MCF 10A (cell line): ENCODE measurements at regions of chr1 and their contacts with region 1.

Region 1: GRCh38 chr1:51535006-51535592 is 16.0 kb upstream of the EPS15 start:
- DNase-seq: peak; percentile 65
- H3K4me3 Mint-ChIP-seq: no peak overlapping the region
- H3K27ac Mint-ChIP-seq: peak overlapping the region; percentile 32
- H3K4me1 Mint-ChIP-seq: peaks cover 7% of the 10 kb centered on the region
- H3K27me3 Mint-ChIP-seq: no peaks in the 10 kb centered on the region
- CTCF ChIP-seq: peak; percentile 55

Region 2: DNA sequence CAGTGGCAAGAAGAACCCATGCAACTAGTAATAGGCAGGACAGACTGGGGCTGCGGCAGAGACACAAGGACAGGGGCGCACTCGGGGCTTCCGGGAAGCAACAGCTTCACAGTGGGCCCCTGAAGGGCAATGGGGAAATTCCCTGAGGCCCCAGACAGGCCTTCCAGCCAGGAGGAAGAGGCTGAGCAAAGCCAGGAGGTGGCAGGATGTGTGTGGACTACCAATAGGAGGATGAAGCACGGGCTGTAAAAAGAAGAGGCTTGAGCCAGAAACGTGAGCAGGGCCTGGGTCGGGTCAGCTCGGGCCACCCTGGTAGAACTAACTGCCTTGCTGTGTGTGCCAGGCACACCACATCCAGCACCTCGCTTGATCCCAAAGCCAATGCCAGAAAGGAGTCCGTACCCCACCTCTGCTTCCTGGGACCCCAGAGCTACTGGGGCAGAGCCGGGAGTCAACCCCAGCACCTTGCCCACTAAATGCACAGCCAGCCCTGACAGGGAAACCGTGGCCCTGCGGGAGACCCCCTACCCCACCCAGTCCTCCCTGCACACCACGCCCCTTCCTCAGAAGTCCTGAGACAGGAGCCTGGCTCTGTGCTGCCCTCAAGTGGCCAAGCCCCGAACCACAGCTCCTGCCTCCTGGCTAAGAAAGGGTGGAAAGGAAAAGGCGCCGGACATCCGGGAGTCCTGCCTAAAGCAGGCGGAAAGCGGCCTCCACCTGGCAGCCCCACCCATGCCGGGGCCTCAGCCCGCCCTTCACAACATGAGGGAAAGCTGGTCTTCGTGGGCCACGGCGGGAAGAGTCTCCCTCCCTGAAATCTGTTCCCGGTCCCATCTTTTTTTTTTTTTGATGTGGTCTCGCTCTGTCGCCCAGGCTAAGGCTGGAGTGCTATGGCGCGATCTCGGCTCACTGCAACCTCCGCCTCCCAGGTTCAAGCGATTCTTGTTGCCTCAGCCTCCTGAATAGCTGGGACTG is 238.4 kb before region 1 on chr1:
- CTCF ChIA-PET with region 1: interaction called, 11 read pairs
- POLR2A ChIA-PET with region 1: no interaction called
- intact Hi-C with region 1: loop called (anchors 1 kb)
- DNase-seq: peak; percentile 83
- H3K4me3 Mint-ChIP-seq: peak overlapping the region; percentile 41
- H3K27ac Mint-ChIP-seq: no peak overlapping the region
- H3K4me1 Mint-ChIP-seq: peaks cover 13% of the 10 kb centered on the region
- H3K27me3 Mint-ChIP-seq: no peaks in the 10 kb centered on the region
- CTCF ChIP-seq: peak; percentile 98

Region 3: DNA sequence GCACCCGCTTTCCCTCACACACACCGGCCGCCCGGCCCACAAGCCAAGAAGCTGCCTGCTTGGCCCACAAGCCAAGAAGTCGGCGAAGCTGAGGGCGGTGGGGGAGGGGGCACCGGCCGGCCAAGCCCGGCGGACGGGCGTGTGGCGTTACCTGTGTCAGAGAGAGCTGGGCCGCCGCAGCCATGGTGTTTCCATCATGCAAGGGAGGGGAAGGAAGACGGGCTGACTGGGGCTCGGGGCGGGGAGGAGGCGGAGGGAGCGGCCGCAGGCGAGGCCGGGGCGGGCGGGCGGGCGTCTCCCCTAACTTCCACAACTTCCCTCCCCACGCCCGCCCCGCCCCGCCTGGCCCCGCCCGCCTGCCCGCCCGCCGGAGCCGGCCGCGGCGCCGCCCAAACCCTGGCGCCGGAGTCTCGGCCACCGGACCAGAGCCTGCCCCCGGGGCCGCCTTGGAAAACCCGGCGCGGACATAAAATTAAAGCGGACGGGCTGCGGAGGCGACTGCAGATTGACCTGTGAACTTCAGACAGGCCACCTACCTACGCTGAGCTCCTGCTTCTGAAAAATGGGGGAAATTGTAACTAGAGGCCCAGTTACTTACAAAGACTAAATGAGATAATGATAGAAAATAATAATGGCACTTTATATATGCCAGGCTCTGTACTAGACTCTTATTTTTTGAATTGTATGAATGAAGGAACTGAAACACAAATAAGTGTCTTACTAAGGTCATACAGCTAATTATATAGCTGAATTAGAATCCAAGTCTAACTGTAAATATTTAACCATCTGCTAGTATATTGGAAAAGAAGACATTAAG is 15.8 kb before region 1 on chr1 and contains the start of gene EPS15:
- CTCF ChIA-PET with region 1: interaction called, 25 read pairs
- POLR2A ChIA-PET with region 1: interaction called, 3 read pairs
- intact Hi-C with region 1: no loop called
- DNase-seq: peak; percentile 87
- H3K4me3 Mint-ChIP-seq: peak within 1 kb of the TSS; percentile 79
- H3K27ac Mint-ChIP-seq: peak within 1 kb of the TSS; percentile 93
- H3K4me1 Mint-ChIP-seq: peaks cover 17% of the 10 kb centered on the region
- H3K27me3 Mint-ChIP-seq: no peaks in the 10 kb centered on the region
- CTCF ChIP-seq: no peak
- total RNA-seq, gene EPS15: 48.2 and 48.7 TPM in 2 replicates

Region 4: GRCh38 chr1:51553911-51554310 is 18.8 kb after region 1 on chr1:
- CTCF ChIA-PET with region 1: interaction called, 18 read pairs
- POLR2A ChIA-PET with region 1: no interaction called
- intact Hi-C with region 1: no loop called
- DNase-seq: no peak
- H3K4me3 Mint-ChIP-seq: no peak overlapping the region
- H3K27ac Mint-ChIP-seq: no peak overlapping the region
- H3K4me1 Mint-ChIP-seq: peaks cover 10% of the 10 kb centered on the region
- H3K27me3 Mint-ChIP-seq: no peaks in the 10 kb centered on the region
- CTCF ChIP-seq: no peak

Region 5: GRCh38 chr1:51616901-51617708 is 82.0 kb after region 1 on chr1 and contains the start of gene OSBPL9:
- CTCF ChIA-PET with region 1: no interaction called
- POLR2A ChIA-PET with region 1: no interaction called
- intact Hi-C with region 1: loop called (anchors 10 kb)
- DNase-seq: peak; percentile 92
- H3K4me3 Mint-ChIP-seq: peak within 1 kb of the TSS; percentile 97
- H3K27ac Mint-ChIP-seq: peak within 1 kb of the TSS; percentile 98
- H3K4me1 Mint-ChIP-seq: peaks cover 39% of the 10 kb centered on the region
- H3K27me3 Mint-ChIP-seq: no peaks in the 10 kb centered on the region
- CTCF ChIP-seq: no peak
- total RNA-seq, gene OSBPL9: 51.7 and 60.4 TPM in 2 replicates

Region 6: DNA sequence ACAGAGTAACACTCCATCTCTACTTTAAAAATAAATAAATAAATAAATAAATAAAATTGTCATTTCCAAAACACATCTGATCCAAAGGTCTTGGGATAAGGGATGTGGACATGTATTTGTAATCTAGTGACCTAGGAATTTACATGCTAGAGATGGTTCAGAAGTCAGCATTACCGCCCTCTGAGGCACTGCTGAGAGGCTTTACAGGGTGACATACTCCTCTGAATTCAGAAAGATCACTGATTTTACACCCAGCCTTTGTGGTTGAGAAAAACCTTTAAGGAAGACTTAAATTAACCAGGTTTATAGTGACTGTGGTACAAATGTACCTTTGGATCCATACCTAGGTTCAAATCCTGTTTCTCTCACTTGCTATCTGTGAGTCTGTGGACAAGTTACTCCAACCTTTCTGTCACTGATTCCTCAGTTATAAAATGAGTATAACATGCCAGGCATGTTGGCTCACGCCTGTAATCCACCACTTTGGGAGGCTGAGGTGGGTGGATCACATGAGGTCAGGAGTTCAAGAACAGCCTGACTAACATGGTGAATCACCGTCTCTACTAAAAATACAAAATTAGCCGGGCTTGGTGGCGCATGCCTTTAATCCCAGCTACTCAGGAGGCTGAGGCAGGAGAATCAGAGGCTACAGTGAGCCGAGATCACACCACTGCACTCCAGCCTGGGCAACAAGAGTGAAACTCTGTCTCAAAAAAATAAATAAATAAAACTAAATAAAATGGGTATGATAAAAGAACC is 101.8 kb after region 1 on chr1:
- CTCF ChIA-PET with region 1: no interaction called
- POLR2A ChIA-PET with region 1: no interaction called
- intact Hi-C with region 1: no loop called
- DNase-seq: peak; percentile 89
- H3K4me3 Mint-ChIP-seq: no peak overlapping the region
- H3K27ac Mint-ChIP-seq: peak overlapping the region; percentile 42
- H3K4me1 Mint-ChIP-seq: peaks cover 18% of the 10 kb centered on the region
- H3K27me3 Mint-ChIP-seq: no peaks in the 10 kb centered on the region
- CTCF ChIP-seq: no peak

Region 7: GRCh38 chr1:51697166-51697565 is 162.1 kb after region 1 on chr1:
- CTCF ChIA-PET with region 1: no interaction called
- POLR2A ChIA-PET with region 1: no interaction called
- intact Hi-C with region 1: no loop called
- DNase-seq: peak; percentile 33
- H3K4me3 Mint-ChIP-seq: no peak overlapping the region
- H3K27ac Mint-ChIP-seq: peak overlapping the region; percentile 70
- H3K4me1 Mint-ChIP-seq: peaks cover 42% of the 10 kb centered on the region
- H3K27me3 Mint-ChIP-seq: no peaks in the 10 kb centered on the region
- CTCF ChIP-seq: no peak